ENCODE measurements at regions of chr10 and their contacts with region 1.

Region 1: GRCh38 chr10:122565728-122566206 is 5.2 kb downstream of the DMBT1 start:
- H3K4me3 ChIP-seq: no peak overlapping the region
- H3K27ac ChIP-seq: no peak overlapping the region
- H3K4me1 ChIP-seq: no peaks in the 10 kb centered on the region
- CTCF ChIP-seq: no peak

Region 2: DNA sequence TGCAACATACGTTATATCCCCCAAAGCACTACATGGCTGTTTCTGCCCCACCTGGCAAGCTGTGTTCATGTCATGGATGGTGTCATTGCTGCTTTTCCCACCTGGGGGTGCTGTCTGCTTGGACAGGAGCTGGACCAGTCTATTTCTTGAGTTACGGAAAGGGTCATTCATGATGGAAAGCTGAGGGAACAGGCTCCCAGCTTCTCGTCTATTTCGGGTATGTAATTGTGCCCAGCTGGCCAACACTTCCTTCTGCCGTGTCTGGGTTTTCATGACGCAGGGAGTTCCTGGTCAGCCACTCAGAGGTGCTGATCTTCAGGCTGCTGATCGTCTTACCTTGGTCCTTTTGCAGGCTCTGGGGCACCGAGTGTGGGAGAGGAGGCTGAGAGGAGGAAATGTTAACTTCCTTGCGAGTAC is 286.0 kb before region 1 on chr10:
- CTCF ChIA-PET with region 1: interaction called, 19 read pairs
- POLR2A ChIA-PET with region 1: no interaction called
- H3K4me3 ChIP-seq: no peak overlapping the region
- H3K27ac ChIP-seq: no peak overlapping the region
- H3K4me1 ChIP-seq: no peaks in the 10 kb centered on the region
- CTCF ChIP-seq: peak; percentile 73

Region 3: GRCh38 chr10:122307669-122308486 is 257.9 kb before region 1 on chr10:
- CTCF ChIA-PET with region 1: interaction called, 11 read pairs
- POLR2A ChIA-PET with region 1: no interaction called
- H3K4me3 ChIP-seq: no peak overlapping the region; the same call in 1 of the 2 replicates
- H3K27ac ChIP-seq: peak overlapping the region; percentile 64
- H3K4me1 ChIP-seq: peaks cover 13% of the 10 kb centered on the region
- CTCF ChIP-seq: no peak

Region 4: GRCh38 chr10:122435212-122435827 is 130.4 kb before region 1 on chr10:
- CTCF ChIA-PET with region 1: interaction called, 31 read pairs
- POLR2A ChIA-PET with region 1: no interaction called
- H3K4me3 ChIP-seq: no peak overlapping the region
- H3K27ac ChIP-seq: no peak overlapping the region
- H3K4me1 ChIP-seq: no peaks in the 10 kb centered on the region
- CTCF ChIP-seq: 0 out of 2 replicates have a peak, but pooled peaks have one; percentile 15

Region 5: GRCh38 chr10:122504610-122504950 is 61.2 kb before region 1 on chr10:
- CTCF ChIA-PET with region 1: interaction called, 13 read pairs
- POLR2A ChIA-PET with region 1: no interaction called
- H3K4me3 ChIP-seq: no peak overlapping the region
- H3K27ac ChIP-seq: no peak overlapping the region
- H3K4me1 ChIP-seq: no peaks in the 10 kb centered on the region; the same call in 1 of the 2 replicates
- CTCF ChIP-seq: 0 out of 2 replicates have a peak, but pooled peaks have one; percentile 18

Region 6: GRCh38 chr10:122577311-122577885 is 11.6 kb after region 1 on chr10:
- CTCF ChIA-PET with region 1: interaction called, 12 read pairs
- POLR2A ChIA-PET with region 1: no interaction called
- H3K4me3 ChIP-seq: no peak overlapping the region
- H3K27ac ChIP-seq: no peak overlapping the region
- H3K4me1 ChIP-seq: no peaks in the 10 kb centered on the region
- CTCF ChIP-seq: no peak

Region 7: DNA sequence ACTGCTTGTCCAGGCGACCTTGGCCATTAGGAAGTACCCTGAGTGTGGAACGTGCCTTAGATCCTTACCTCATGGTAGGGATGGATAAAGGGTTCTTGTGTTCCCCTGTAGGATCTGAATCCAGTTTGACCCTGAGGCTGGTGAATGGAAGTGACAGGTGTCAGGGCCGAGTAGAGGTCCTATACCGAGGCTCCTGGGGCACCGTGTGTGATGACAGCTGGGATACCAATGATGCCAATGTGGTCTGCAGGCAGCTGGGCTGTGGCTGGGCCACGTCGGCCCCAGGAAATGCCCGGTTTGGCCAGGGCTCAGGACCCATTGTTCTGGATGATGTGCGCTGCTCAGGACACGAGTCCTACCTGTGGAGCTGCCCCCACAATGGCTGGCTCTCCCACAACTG is 26.4 kb after region 1 on chr10:
- CTCF ChIA-PET with region 1: no interaction called
- POLR2A ChIA-PET with region 1: no interaction called
- H3K4me3 ChIP-seq: no peak overlapping the region
- H3K27ac ChIP-seq: no peak overlapping the region
- H3K4me1 ChIP-seq: no peaks in the 10 kb centered on the region
- CTCF ChIP-seq: no peak

Region 8: GRCh38 chr10:122637376-122637775 is 71.6 kb after region 1 on chr10:
- CTCF ChIA-PET with region 1: no interaction called
- POLR2A ChIA-PET with region 1: no interaction called
- H3K4me3 ChIP-seq: no peak overlapping the region
- H3K27ac ChIP-seq: no peak overlapping the region
- H3K4me1 ChIP-seq: no peaks in the 10 kb centered on the region
- CTCF ChIP-seq: no peak

Region 9: DNA sequence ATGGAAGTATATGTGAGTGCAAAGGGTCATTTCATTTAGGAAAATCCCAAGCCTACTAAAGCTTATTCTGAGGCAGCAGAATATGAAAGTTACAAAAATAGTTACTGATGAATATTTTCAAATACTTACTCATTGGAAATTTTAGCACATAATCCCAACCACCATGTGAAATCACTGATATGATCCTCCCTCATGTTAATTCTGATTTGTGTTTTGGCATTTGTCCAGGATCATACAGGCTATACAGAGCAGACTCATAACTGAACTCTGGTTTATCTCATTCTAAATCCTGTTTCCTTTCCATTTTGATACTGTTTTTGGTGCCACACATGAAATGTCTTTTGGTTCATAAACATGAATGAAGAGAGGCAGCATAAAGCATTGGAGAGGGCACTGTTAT is 317.0 kb after region 1 on chr10:
- CTCF ChIA-PET with region 1: no interaction called
- POLR2A ChIA-PET with region 1: no interaction called
- H3K4me3 ChIP-seq: no peak overlapping the region
- H3K27ac ChIP-seq: no peak overlapping the region
- H3K4me1 ChIP-seq: peaks cover 3% of the 10 kb centered on the region
- CTCF ChIP-seq: no peak

Region 10: GRCh38 chr10:122911889-122912484 is 346.2 kb after region 1 on chr10:
- CTCF ChIA-PET with region 1: no interaction called
- POLR2A ChIA-PET with region 1: no interaction called
- H3K4me3 ChIP-seq: no peak overlapping the region
- H3K27ac ChIP-seq: no peak overlapping the region
- H3K4me1 ChIP-seq: no peaks in the 10 kb centered on the region
- CTCF ChIP-seq: no peak